Activated naive CD4-positive, alpha-beta T cell treated with anti-CD3 and anti-CD28 coated beads for 36 hours (primary cell): ENCODE measurements at regions of chr3 and their contacts with region 1.

Region 1: GRCh38 chr3:183515968-183516851 is 39.3 kb downstream of the KLHL6 start:
- DNase-seq: peak; percentile 80
- H3K4me3 Mint-ChIP-seq: peak overlapping the region; percentile 17
- H3K27ac Mint-ChIP-seq: peak overlapping the region; percentile 90
- H3K4me1 Mint-ChIP-seq: peaks cover 81% of the 10 kb centered on the region
- H3K27me3 Mint-ChIP-seq: no peaks in the 10 kb centered on the region

Region 2: GRCh38 chr3:183427876-183428446 is 88.2 kb before region 1 on chr3:
- CTCF ChIA-PET with region 1: no interaction called
- intact Hi-C with region 1: loop called (anchors 1 kb)
- DNase-seq: peak; percentile 40
- H3K4me3 Mint-ChIP-seq: peak overlapping the region; percentile 79
- H3K27ac Mint-ChIP-seq: no peak overlapping the region
- H3K4me1 Mint-ChIP-seq: peaks cover 27% of the 10 kb centered on the region
- H3K27me3 Mint-ChIP-seq: peaks cover 14% of the 10 kb centered on the region

Region 3: DNA sequence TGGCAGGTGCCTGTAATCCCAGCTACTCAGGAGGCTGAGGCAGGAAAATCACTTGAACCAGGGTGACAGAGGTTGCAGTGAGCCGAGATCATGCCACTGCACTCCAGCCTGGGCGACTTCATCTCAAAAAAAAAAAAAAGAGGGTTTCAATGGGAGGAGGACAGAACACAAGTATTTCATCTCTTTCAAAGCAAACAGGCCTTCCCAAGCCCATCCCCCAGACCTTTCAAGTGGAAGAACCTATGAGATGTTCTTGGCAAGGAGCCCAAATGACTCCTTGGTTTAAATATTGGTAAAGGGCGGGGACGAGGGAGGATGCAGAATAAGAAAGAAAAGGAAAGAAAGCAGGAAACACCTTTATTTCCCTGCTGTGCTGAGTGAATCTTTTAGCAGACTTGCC is 25.5 kb before region 1 on chr3:
- CTCF ChIA-PET with region 1: interaction called, 7 read pairs
- intact Hi-C with region 1: loop called (anchors 2 kb)
- DNase-seq: peak; percentile 62
- H3K4me3 Mint-ChIP-seq: no peak overlapping the region
- H3K27ac Mint-ChIP-seq: peak overlapping the region; percentile 69
- H3K4me1 Mint-ChIP-seq: peaks cover 14% of the 10 kb centered on the region
- H3K27me3 Mint-ChIP-seq: no peaks in the 10 kb centered on the region

Region 4: GRCh38 chr3:183536238-183536880 is 20.1 kb after region 1 on chr3:
- CTCF ChIA-PET with region 1: interaction called, 3 read pairs
- intact Hi-C with region 1: loop called (anchors 1 kb)
- DNase-seq: no peak
- H3K4me3 Mint-ChIP-seq: no peak overlapping the region
- H3K27ac Mint-ChIP-seq: no peak overlapping the region
- H3K4me1 Mint-ChIP-seq: peaks cover 71% of the 10 kb centered on the region
- H3K27me3 Mint-ChIP-seq: no peaks in the 10 kb centered on the region

Region 5: DNA sequence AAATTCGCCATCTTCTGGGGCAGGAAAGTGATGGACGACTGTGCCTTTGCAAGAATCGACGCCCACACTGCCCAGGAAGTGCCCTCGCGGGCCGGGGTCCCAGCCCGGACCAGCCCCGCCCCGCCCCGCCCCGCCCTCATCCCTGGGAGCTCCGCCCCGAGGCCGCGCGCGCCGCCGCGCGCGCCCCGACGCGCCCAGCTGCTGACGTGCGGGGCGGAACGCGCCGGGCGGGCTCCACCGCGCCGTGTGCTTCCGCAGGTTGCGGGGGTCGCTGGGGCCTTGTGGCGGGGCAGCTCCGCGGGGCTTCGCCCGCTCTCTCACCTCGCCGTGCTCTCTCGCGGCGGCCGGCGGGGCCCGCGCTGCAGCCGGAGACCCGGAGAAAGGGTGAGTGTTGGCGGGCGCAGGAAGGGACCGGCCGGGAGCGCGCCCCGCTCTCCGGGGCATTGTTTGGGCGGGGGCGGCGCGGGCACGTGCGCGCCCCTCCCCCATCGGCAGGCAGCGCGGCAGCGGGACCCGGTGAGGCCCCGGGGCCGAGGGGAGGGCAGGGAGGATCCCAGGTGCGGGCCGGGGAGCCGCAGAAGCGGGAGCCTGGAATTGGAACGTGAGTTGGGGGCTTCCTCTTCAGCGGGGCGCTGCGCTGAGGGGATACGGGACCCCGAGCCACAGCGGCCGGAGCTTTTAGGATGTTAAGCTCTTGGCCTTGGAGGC is 181.6 kb after region 1 on chr3 and contains the start of gene YEATS2:
- CTCF ChIA-PET with region 1: no interaction called
- intact Hi-C with region 1: loop called (anchors 1 kb)
- DNase-seq: peak; percentile 79
- H3K4me3 Mint-ChIP-seq: peak within 1 kb of the TSS; percentile 80
- H3K27ac Mint-ChIP-seq: peak within 1 kb of the TSS; percentile 91
- H3K4me1 Mint-ChIP-seq: peaks cover 28% of the 10 kb centered on the region
- H3K27me3 Mint-ChIP-seq: no peaks in the 10 kb centered on the region
- total RNA-seq, gene YEATS2: 38.1 to 39.0 TPM